Activated CD4-positive, alpha-beta T cell treated with anti-CD3 and anti-CD28 coated beads, Interleukin-2, amount 10 ng/mL, durations not matched to agents 24 days and 14 days (primary cell): ENCODE measurements at regions of chr1 and their contacts with region 1.

Region 1: DNA sequence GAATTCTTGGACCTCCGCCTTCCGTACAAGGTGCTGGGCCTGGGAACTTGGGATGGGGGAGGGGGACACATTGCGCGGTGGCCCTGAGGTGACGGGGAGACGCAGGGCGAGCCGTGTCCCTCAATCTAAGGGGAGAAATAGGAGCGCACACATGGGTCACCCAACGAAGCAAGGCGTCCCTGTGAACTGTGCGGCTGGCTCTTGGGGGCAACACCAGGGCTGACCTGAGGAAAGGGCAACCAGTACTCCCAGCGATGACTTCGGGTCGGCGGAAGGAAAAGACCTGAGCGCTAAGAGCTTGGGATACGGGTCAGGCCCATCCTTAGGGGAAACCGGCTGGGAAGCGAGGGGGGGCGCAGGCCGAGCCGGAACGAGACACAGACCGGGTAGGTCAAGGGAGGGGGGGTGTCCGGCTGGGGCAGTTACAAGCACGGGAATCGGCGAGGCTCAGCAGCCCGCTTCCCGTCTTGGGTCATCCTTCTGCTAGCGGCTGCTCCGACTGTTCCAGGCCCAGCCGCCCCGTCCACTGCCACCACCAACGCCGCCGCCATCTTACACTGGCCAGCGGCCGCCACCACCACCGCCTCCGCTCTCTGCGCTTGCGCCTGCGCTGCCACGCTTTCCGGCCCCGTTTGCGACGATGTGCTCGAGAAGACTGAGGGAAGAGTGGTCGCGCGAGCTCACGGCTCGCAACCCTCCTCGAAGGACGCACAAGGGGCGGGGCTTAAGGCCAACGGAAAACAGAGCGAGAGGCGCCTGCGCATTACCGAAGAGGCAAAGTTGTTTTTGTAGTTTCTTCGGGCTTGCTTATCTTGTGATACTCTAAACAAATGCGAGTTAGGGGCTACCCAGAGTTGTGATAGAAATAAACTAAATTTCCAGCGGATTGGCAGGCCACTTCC is at the start of gene DCAF8:
- DNase-seq: peak; percentile 100
- H3K4me3 Mint-ChIP-seq: peak within 1 kb of the TSS; percentile 99
- H3K27ac Mint-ChIP-seq: peak within 1 kb of the TSS; percentile 99
- H3K4me1 Mint-ChIP-seq: peaks cover 31% of the 10 kb centered on the region
- H3K27me3 Mint-ChIP-seq: no peaks in the 10 kb centered on the region
- total RNA-seq, gene DCAF8: 117 and 121 TPM in 2 replicates

Region 2: DNA sequence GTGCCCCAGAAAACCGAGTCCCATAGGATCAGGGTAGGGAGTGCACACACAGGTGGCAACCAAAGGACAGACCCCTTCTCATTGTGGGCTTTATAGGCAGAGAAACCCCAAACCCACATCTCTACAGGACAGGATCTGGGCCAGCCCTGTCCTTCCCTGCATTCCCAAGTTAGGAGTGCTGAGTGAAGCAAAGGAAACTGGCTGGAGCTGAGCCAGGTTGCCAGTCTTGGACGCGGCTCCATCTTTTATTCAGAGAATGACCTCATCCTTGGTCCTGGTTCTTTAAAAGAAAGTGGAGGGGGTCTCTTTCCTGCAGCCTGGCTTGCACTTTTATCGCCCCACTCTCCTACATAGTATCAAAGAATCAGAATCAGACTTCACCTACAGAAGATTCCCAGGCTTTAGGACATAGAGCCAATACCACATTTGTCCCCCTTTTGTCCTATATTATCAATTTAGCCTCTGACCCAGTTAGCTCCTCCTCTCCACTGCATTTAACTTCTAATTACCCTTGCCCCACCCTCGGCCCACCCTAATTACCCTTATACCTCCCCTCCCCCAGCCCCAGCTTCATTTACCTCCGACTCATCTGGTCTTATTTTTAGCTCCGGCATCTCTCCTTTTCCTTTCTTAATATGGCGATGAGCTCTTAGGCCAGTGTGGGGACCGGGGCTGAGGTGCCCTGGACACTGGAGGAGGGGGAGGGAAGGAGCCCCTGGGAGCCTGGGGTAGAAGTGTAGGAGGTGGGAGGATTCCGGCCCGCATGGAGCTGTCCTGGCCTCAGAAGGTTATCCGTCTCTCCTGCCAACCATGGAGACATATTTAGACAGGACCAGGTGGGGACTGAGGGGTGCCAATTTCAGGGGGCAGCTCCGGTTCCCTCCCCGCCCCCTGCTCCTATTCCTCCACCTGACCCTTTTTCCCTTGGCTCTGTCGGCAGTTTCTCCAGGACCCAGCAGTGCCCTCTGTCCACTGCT is 72.2 kb before region 1 on chr1 and contains the start of gene CASQ1:
- intact Hi-C with region 1: no loop called
- DNase-seq: no peak
- H3K4me3 Mint-ChIP-seq: no peak within 1 kb of the TSS
- H3K27ac Mint-ChIP-seq: no peak within 1 kb of the TSS
- H3K4me1 Mint-ChIP-seq: no peaks in the 10 kb centered on the region
- H3K27me3 Mint-ChIP-seq: no peaks in the 10 kb centered on the region
- total RNA-seq, gene CASQ1: not detected in 2 replicates

Region 3: GRCh38 chr1:160205242-160206035 is 56.7 kb before region 1 on chr1 and contains the start of gene PEA15:
- intact Hi-C with region 1: loop called (anchors 2 kb)
- DNase-seq: peak; percentile 92
- H3K4me3 Mint-ChIP-seq: peak within 1 kb of the TSS; percentile 91
- H3K27ac Mint-ChIP-seq: peak within 1 kb of the TSS; percentile 91
- H3K4me1 Mint-ChIP-seq: peaks cover 40% of the 10 kb centered on the region
- H3K27me3 Mint-ChIP-seq: no peaks in the 10 kb centered on the region
- total RNA-seq, gene PEA15: 70.2 and 70.9 TPM in 2 replicates

Region 4: GRCh38 chr1:160284782-160285344 is 22.7 kb after region 1 on chr1 and contains the start of gene PEX19:
- intact Hi-C with region 1: loop called (anchors 1 kb)
- DNase-seq: peak; percentile 99
- H3K4me3 Mint-ChIP-seq: peak within 1 kb of the TSS; percentile 100
- H3K27ac Mint-ChIP-seq: peak within 1 kb of the TSS; percentile 90
- H3K4me1 Mint-ChIP-seq: peaks cover 21% of the 10 kb centered on the region
- H3K27me3 Mint-ChIP-seq: no peaks in the 10 kb centered on the region
- total RNA-seq, gene PEX19: 51.8 and 60.2 TPM in 2 replicates

Region 5: DNA sequence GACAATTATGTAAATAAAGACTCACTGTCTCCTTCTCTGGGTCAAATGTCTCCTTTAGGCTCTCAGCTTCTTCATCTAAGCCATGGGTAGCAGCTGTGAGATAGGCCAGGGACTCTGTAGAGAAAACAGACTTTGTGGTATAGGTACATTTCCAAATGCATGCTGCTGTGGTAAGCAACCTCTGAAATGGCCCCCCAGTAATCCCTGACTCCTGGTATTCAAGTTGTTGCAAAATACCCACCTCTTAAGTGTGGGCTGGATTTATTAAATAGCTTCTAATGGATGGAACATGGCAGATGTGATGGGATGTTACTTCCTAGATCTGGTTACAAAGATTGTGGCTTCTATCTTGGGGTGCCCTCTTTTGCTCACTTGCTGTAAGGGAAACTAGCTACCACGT is 33.9 kb after region 1 on chr1:
- intact Hi-C with region 1: no loop called
- DNase-seq: no peak
- H3K4me3 Mint-ChIP-seq: no peak overlapping the region
- H3K27ac Mint-ChIP-seq: peak overlapping the region; percentile 8
- H3K4me1 Mint-ChIP-seq: peaks cover 2% of the 10 kb centered on the region
- H3K27me3 Mint-ChIP-seq: no peaks in the 10 kb centered on the region

Region 6: DNA sequence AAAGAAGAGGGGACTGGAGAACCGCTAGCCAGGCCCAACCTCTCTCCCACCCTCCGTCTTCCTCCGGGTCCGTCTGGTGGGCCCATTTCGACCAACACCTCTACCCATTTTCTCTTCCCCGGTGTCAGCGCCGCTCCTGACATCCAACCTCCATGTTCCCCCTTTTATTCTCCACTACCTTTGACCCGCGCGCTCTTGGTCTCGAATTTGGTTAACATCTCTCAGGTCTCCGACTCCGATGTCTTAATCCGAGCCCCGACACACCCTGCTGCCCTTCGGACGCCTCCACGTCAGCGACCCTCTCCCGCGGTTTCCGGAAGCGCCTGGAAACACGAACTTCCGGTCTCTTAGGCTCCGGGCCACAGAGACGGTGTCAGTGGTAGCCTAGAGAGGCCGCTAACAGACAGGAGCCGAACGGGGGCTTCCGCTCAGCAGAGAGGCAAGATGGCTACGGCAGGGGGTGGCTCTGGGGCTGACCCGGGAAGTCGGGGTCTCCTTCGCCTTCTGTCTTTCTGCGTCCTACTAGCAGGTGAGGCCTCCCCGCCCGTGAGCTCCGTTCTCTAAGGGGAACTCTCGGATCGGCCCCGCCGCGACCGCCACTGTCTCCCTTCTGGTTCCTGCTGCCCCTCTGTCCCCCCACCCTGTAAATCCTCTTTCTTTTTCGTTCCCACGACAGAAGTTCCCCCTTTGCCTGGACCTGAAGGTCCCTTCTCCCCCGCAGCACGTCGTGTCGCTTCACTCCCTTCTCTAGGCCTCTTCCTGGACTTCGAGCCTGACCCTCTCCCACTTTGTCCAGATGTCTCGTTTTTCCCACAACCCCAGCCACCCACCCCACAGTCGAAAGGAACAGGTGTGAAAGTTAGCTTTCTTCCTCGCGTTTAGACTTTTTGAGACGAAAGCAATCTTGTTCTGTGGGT is 81.1 kb after region 1 on chr1 and contains the starts of genes COPA and NCSTN:
- intact Hi-C with region 1: loop called (anchors 2 kb)
- DNase-seq: peak; percentile 97
- H3K4me3 Mint-ChIP-seq: peak within 1 kb of the TSS; percentile 96
- H3K27ac Mint-ChIP-seq: peak within 1 kb of the TSS; percentile 97
- H3K4me1 Mint-ChIP-seq: peaks cover 41% of the 10 kb centered on the region
- H3K27me3 Mint-ChIP-seq: no peaks in the 10 kb centered on the region
- total RNA-seq, gene COPA: 116 and 125 TPM in 2 replicates
- total RNA-seq, gene NCSTN: 73.6 and 81.1 TPM in 2 replicates

Region 7: GRCh38 chr1:160623227-160623633 is 361.1 kb after region 1 on chr1:
- intact Hi-C with region 1: loop called (anchors 5 kb)
- DNase-seq: peak; percentile 78
- H3K4me3 Mint-ChIP-seq: peak overlapping the region; percentile 75
- H3K27ac Mint-ChIP-seq: peak overlapping the region; percentile 99
- H3K4me1 Mint-ChIP-seq: peaks cover 83% of the 10 kb centered on the region
- H3K27me3 Mint-ChIP-seq: no peaks in the 10 kb centered on the region